ENCODE measurements at regions of chr16 and their contacts with region 1.

Region 1: DNA sequence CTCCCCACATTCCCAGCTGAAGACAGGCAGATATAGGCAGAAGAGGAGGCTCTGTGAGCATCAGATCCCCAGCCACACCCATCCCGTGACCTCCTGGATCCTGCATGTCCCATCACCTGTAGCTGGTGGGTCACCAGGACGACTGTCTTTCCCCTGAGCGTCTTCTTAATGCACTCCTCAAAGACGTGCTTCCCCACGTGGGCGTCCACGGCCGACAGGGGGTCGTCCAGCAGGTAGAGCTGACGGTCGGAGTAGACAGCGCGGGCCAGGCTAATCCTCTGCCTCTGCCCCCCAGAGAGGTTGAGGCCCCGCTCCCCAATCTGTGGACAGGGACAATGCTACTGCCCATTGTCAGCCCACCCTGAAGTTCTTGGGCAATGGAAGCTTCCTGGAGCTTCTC is 40.5 kb downstream of the ABCC12 start:
- DNase-seq: no peak

Region 2: GRCh38 chr16:48076455-48077012 is 38.8 kb before region 1 on chr16:
- intact Hi-C with region 1: loop called in 1 of 2 experiments (anchors 2 kb)
- DNase-seq: no peak

Region 3: DNA sequence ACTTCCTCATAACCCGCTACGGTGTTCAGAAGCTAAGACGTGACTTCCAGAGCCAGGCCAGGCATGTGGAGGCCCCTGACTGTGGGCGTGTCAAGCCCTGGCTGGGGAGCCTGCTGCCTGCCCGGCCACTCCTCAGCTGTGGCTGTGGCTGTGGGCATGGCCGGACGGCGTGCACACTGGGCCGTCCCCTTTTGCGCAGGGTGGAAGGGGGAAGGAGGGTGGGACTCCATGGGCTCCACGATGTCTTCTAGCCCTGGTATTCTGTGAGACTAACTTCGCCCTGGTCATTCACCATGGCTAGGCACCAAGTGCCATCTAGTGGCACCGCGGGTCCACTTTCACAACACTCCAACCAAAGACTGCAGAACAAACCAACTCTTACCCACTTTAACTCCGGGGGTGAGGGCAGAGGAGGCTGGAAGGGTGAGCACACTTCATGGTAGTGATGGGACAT is 426.7 kb after region 1 on chr16:
- intact Hi-C with region 1: no loop called
- DNase-seq: peak; percentile 89

Region 4: DNA sequence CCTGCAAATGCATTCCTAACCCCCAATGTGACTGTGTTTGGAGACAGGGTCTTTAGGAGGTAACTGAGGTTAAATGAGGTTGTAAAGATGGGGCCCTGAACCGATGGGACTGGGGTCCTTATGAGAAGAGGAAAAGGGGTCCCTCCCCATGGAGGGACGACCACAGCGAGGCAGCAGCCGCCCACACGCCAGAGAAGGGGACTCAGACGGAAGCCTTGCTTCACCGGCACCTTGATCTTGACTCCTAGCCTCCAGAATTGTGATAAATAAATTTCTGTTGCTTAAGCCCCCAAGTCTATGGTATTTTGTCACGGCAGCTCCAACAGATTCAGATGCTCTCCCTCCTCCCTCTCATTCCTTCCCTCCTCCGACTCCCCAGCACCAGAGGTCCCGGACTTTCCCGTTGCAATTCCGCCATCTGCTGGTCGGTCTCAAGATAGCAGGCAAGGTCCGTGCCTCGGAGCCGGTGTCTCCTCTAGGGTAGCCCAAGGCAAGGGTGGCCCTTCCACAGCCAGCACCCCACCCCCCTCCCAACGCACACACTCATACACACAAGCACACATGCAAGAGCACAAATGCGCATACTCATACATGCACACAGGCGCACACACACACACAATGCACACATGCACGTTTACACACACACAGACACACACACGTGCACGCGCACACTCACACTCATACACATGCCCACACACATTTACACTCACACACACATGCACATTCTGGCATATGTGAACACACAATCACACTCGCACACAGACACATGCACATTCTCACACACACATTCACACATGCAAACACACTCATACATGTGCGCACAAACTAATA is 1235.2 kb after region 1 on chr16:
- intact Hi-C with region 1: no loop called
- DNase-seq: peak; percentile 91